A673 (cell line): ENCODE measurements at regions of chr3 and their contacts with region 1.

Region 1: DNA sequence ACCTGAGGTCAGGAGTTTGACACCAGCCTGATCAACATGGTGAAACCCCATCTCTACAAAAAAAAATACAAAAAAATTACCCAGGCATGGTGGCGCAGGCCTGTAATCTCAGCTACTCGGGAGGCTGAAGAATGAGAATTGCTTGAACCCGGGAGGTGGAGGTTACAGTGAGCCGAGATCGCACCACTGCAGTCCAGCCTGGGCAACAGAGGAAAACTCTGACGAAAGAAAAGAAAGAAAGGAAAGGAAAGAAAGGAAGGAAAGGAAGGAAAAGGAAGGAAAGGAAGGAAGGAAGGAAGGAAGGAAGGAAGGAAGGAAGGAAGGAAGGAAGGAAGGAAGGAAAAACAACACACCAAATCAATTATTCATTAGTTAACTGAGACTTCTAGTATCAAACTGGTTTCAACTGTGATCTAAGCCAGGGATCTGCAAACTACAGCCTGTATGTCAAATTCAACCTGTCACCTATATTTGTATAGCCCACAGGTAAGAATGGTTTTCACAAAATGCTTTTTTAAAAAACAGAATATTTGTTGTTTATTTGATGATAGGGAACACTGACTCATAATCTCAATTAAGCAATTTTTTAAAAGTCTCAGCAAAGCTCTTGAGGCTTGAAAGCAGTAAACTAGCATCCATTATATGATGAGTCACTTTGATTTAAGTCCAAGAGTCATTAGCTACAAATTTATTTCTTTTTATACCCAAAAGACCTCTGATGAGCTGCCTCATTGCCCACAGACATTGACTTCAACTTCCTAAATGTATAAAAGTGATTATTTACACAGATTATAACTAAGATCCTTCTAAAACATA is 127.6 kb downstream of the TBL1XR1 start:
- DNase-seq: peak; percentile 94
- H3K4me3 ChIP-seq: no peak overlapping the region
- H3K27ac ChIP-seq: peak overlapping the region; percentile 96
- H3K4me1 ChIP-seq: peaks cover 80% of the 10 kb centered on the region
- H3K27me3 ChIP-seq: no peaks in the 10 kb centered on the region
- CTCF ChIP-seq: no peak

Region 2: GRCh38 chr3:176978441-176978840 is 91.3 kb before region 1 on chr3:
- CTCF ChIA-PET with region 1: no interaction called
- POLR2A ChIA-PET with region 1: no interaction called
- intact Hi-C with region 1: no loop called
- DNase-seq: no peak
- H3K4me3 ChIP-seq: no peak overlapping the region
- H3K27ac ChIP-seq: no peak overlapping the region
- H3K4me1 ChIP-seq: no peaks in the 10 kb centered on the region
- H3K27me3 ChIP-seq: no peaks in the 10 kb centered on the region
- CTCF ChIP-seq: no peak

Region 3: DNA sequence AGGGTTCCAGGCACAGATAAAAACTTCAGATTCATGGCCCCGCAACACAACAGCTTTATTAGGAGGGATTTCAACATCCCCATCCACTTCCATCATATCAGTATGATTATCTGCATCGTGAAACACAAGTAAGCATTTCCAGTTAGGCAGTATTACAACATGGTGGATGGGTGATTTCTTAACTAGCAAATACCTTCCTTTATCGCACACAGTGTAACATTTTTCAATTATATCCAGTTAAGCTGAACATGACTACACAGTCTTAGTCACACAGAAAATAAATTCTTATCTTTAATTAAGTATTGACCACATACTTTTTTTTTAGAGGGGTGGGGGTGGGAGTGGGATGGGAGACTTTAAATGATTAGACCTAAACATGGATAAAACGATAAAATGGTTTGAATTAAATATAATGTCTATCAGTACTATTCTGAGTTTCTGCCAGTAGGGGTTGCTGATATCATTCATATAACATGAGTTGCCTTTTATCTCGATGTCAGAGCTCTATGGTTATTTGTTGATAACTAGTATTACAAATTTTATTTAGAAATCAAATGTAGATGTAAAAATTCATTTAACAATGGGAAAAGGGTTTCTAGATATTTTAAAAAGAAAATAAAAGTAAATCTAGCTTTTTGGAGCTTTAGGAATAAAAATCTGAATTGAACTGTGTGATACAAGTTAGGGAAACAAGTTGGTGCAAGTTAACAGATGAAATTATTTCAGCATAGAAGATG is 19.1 kb before region 1 on chr3:
- CTCF ChIA-PET with region 1: interaction called, 7 read pairs
- POLR2A ChIA-PET with region 1: no interaction called
- intact Hi-C with region 1: loop called (anchors 2 kb)
- DNase-seq: peak; percentile 77
- H3K4me3 ChIP-seq: no peak overlapping the region
- H3K27ac ChIP-seq: peak overlapping the region; percentile 79
- H3K4me1 ChIP-seq: peaks cover 77% of the 10 kb centered on the region
- H3K27me3 ChIP-seq: no peaks in the 10 kb centered on the region
- CTCF ChIP-seq: peak; percentile 72

Region 4: DNA sequence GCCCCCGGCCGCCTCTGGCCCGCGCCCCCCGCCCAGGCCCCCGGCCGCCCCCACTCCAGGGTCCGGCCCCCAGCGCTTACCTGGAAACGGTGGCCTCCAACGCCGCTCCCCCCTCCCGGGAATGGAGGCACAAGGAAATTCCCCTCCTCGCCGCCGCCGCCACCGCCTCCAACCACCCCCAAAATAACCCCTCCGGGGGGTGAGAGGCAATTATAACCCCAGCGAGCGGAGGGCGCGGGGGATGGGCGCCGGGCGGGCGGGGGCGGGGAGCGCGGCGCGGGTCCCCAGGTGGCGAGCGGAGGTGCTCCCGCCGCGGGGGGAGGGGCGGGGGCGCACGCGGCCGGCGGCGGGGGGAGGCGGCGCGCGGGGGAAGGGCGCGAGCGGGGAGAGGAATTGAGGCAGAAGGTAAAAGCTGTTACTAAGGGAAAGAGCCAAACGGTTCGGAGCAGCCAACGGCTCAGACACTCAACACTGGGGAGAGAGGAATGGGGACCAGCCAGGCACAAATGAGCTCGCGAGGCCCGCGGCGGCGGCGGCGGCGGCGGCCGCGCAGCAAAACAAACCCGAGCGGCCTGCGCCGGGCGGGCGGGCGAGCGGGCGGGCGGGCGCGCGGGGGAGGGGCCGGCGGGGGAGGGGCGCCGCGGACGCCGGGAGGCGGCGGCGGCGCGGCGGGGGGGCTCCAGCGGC is 127.5 kb after region 1 on chr3 and contains the start of gene TBL1XR1:
- CTCF ChIA-PET with region 1: interaction called, 5 read pairs
- POLR2A ChIA-PET with region 1: interaction called, 6 read pairs
- intact Hi-C with region 1: loop called (anchors 1 kb)
- DNase-seq: peak; percentile 96
- H3K4me3 ChIP-seq: peak within 1 kb of the TSS; percentile 79
- H3K27ac ChIP-seq: peak within 1 kb of the TSS; percentile 98
- H3K4me1 ChIP-seq: peaks cover 29% of the 10 kb centered on the region
- H3K27me3 ChIP-seq: no peaks in the 10 kb centered on the region
- CTCF ChIP-seq: no peak
- total RNA-seq, gene TBL1XR1: 186 and 220 TPM in 2 replicates

Region 5: GRCh38 chr3:177441813-177442646 is 372.3 kb after region 1 on chr3:
- CTCF ChIA-PET with region 1: no interaction called
- POLR2A ChIA-PET with region 1: no interaction called
- intact Hi-C with region 1: loop called (anchors 5 kb)
- DNase-seq: no peak
- H3K4me3 ChIP-seq: no peak overlapping the region
- H3K27ac ChIP-seq: no peak overlapping the region
- H3K4me1 ChIP-seq: peaks cover 36% of the 10 kb centered on the region
- H3K27me3 ChIP-seq: no peaks in the 10 kb centered on the region
- CTCF ChIP-seq: no peak

Region 6: DNA sequence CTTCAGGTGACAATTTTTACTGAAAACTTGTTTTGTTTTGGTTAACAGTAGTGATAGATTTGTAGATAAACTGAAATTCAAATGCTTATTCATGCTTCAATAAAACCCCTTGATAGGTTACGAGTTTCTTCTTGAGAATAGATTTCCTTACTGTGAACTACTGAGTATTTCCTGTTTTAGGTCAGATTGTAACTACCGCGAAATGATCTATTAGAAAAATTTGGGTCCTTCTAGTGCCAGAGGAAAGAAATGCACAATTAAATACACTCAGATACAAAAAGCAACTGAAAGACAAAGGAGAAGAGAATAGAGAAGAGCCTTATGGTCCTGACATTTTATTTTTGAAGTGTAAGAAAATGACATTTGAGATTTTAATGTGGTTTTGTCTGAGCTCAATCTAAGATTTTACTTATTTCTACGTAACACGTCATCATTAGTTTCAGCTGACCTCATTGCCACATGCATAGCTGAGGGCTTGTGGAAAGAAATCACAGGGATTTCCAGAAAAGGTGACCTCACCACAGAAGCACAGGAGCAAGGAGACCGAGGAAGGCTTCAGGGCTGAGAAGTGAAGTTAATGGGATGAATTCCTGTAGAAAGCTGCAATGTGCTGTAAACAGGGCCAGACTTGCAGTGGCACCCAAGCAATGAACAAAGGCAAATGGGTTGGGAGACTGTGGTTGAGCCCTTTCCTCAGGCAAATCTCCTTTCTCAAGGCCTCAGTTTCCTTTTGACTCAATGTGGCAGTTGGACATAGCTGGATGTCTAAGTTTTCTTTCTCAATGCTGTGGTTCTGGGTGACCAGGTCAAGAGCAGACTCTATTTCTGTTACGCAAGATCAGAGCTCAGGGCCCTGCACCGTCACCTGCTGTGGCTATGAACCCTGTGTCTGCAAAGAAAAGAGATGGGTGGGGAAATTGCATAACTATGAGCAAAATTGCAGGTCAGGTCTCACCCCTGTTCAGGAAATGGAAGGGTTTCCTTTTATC is 379.6 kb after region 1 on chr3:
- CTCF ChIA-PET with region 1: interaction called, 4 read pairs
- POLR2A ChIA-PET with region 1: no interaction called
- intact Hi-C with region 1: loop called (anchors 2 kb)
- DNase-seq: peak; percentile 64
- H3K4me3 ChIP-seq: no peak overlapping the region
- H3K27ac ChIP-seq: peak overlapping the region; percentile 71
- H3K4me1 ChIP-seq: peaks cover 64% of the 10 kb centered on the region
- H3K27me3 ChIP-seq: no peaks in the 10 kb centered on the region
- CTCF ChIP-seq: no peak

Region 7: DNA sequence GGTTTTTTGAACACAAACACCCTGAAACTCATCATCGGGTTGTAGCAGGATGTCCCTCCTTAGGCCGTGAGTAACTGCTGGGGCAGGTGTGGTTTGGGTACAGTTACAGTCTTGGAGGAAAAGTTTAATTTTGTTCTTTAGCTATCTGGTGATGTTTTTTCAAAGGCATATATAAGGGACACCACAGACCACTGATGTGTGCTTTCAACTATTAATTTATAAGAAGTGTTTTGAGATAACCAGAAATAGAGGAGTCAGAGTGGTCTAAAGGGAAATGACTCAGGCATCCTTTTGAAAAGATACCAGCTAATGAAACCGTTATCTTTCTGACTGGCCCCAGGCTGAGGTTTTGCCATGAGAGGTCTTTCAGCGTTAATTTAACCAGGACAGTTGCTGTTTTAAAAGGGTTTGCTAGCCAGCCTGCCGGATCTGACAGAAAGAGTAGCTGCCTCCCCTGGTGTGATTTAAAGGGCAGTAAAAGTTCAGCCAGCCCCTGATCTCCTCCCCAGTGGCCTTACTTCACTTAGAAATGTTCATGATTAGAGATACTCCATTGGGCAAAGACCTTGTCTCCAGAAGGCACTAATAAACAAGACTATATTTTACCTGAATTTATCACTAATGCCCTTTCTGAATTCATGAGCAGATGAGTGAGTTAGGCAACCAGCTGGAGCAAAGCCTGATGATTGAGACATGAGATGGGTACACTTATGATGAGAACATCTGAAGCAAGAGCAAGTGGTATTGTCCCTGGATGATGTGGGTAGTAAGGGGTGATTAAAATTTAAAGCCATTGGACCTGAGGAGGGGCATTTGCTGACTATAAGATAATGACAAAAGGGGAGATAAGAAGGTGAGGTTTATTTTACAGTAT is 610.1 kb after region 1 on chr3:
- CTCF ChIA-PET with region 1: no interaction called
- POLR2A ChIA-PET with region 1: no interaction called
- intact Hi-C with region 1: loop called (anchors 10 kb)
- DNase-seq: no peak
- H3K4me3 ChIP-seq: no peak overlapping the region
- H3K27ac ChIP-seq: no peak overlapping the region
- H3K4me1 ChIP-seq: peaks cover 38% of the 10 kb centered on the region
- H3K27me3 ChIP-seq: no peaks in the 10 kb centered on the region
- CTCF ChIP-seq: no peak

Region 8: DNA sequence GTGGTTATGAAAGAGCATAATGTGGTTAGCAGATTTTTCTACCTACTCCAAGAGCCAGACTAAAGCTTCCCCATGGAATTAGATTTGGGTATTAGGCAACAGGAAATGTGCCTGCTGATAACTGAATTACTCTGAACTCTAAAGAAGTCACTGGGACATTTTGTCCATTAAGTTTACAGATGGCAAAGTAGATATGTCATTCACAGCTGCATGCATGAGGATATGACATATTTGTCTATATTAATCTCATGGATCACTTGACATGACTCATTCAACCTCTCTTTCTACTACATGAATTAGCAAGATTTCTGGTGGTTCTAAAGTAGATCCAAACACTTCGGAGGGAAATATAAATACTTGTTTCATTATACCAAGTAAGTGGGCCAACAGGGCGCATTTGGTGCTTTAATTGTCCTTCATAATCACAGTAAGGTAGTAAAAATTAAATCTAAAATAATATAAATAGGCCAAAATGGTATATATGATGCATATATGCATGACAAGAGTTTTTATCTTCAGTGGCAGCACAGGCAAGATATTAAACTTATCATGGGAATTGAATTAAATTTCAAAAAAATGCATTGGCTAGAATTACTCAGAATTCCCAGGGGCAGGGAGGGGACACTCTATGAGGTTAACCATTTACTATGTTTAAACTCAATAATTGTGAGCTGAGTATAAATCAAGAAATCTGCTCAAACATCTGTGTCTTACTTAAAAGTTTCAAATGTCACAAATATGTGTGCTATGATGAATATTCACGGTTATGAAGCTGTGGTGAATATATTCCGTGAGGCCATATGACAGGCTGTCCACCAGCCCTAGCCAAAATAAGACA is 1101.2 kb after region 1 on chr3:
- CTCF ChIA-PET with region 1: no interaction called
- POLR2A ChIA-PET with region 1: no interaction called
- intact Hi-C with region 1: loop called (anchors 5 kb)
- DNase-seq: peak; percentile 98
- H3K4me3 ChIP-seq: no peak overlapping the region
- H3K27ac ChIP-seq: peak overlapping the region; percentile 60
- H3K4me1 ChIP-seq: peaks cover 25% of the 10 kb centered on the region
- H3K27me3 ChIP-seq: no peaks in the 10 kb centered on the region
- CTCF ChIP-seq: no peak